H1 (cell line): ENCODE measurements at regions of chr11 and their contacts with region 1.

Region 1: DNA sequence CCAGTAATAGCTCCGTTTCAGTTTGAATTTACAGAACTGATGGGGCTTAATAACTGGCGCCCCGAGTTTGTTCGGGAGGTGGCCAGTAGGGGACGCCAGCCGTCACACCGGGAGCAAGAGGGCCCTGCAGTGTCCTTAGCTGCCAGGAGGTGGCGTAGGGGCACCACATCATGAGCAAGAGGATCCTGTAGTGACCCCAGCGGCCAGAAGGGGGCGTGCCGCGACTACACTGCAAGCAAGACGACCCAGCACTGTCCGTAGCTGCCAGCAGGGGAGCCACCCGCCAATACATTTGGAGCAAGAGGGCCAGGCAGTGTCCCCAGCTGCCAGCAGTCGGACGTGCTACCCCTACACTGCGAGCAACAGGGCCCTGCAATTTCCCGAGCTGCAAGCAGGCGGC is 663.7 kb upstream of the B3GAT1 start:
- DNase-seq: peak; percentile 81 to 98
- H3K4me3 ChIP-seq: no peak overlapping the region
- H3K27ac ChIP-seq: no peak overlapping the region
- H3K4me1 ChIP-seq: no peaks in the 10 kb centered on the region; a peak in 1 of 7 replicates
- H3K27me3 ChIP-seq: no peaks in the 10 kb centered on the region
- CTCF ChIP-seq: peak; percentile 93 to 99 (median 99)
- EP300 ChIP-seq: no peak
- POLR2A ChIP-seq: no peak
- RAD21 ChIP-seq: peak; percentile 76 to 77

Region 2: DNA sequence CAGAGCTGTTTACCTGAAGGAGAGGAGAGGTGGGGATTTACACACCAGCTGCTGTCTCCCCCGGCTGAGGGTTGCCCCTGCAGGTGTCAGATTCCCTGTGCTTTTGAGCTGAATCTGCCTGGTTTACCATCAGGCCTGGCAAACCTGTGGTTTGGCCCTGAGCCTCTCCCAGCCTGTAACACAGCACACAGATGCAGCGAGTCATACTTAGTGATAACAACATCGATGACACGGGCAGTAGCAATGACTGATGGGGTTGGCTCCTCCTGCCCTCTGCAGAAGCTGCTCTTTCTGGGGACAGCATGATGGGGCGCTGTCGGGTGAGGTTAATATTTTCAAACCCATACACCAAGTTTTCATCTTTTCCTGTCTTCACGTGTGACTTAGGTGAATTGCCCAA is 283.7 kb before region 1 on chr11:
- CTCF ChIA-PET with region 1: no interaction called
- POLR2A ChIA-PET with region 1: no interaction called
- DNase-seq: no peak
- H3K4me3 ChIP-seq: no peak overlapping the region
- H3K27ac ChIP-seq: no peak overlapping the region
- H3K4me1 ChIP-seq: no peaks in the 10 kb centered on the region; a peak in 1 of 7 replicates
- H3K27me3 ChIP-seq: no peaks in the 10 kb centered on the region; a peak in 3 of 7 replicates
- CTCF ChIP-seq: no peak
- EP300 ChIP-seq: no peak
- POLR2A ChIP-seq: no peak
- RAD21 ChIP-seq: no peak

Region 3: DNA sequence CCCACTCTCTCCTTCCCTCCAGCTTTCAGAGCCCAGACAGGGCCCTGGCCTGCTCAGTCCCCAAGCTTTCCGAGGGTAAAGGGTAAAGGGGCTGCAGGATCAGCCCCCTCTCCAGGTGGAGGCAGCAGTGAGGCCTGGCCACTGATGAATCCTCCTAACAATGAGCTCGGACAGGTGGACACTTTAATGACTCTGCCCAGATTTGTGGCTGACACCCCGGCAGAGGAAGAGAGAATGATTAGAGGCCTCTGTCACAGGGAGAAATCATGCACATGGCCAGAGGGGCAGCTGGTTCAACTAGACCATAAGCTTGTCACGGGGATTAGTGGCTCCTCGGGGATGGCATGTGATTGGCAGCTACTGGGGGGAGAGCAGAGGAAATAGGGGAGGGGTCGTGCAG is 76.2 kb before region 1 on chr11:
- CTCF ChIA-PET with region 1: interaction called, 10 read pairs
- POLR2A ChIA-PET with region 1: no interaction called
- DNase-seq: no peak
- H3K4me3 ChIP-seq: no peak overlapping the region
- H3K27ac ChIP-seq: no peak overlapping the region
- H3K4me1 ChIP-seq: peaks cover 0 to 14% (median 9%) of the 10 kb centered on the region in 4 experiments; a peak in 3 of 7 replicates
- H3K27me3 ChIP-seq: no peaks in the 10 kb centered on the region
- CTCF ChIP-seq: peak; percentile 36 to 57 (median 54)
- EP300 ChIP-seq: no peak
- POLR2A ChIP-seq: no peak
- RAD21 ChIP-seq: peak; percentile 30 to 47

Region 4: DNA sequence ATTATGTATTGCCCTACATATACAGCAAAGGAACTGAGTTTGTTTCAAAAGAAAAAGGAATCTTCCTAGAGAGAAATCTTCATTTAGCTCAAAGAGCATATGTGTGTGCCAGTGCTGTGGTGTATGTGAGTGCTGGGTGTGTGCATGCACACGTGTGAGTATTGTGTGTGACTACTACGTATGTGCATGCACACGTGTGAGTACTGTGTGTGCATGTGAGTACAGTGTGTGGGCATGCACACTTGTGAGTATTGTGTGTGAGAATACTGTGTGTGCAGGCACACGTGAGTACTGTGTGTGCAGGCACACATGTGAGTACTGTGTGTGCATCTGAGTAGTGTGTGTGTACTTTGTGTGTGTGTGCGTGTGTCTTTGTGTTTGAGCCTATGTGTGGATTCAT is 12.7 kb before region 1 on chr11:
- CTCF ChIA-PET with region 1: interaction called, 13 read pairs
- POLR2A ChIA-PET with region 1: no interaction called
- DNase-seq: no peak
- H3K4me3 ChIP-seq: no peak overlapping the region
- H3K27ac ChIP-seq: no peak overlapping the region
- H3K4me1 ChIP-seq: no peaks in the 10 kb centered on the region
- H3K27me3 ChIP-seq: no peaks in the 10 kb centered on the region
- CTCF ChIP-seq: no peak
- EP300 ChIP-seq: no peak
- POLR2A ChIP-seq: no peak
- RAD21 ChIP-seq: no peak